WTC11 (cell line): ENCODE measurements at regions of chr1 and their contacts with region 1.

Region 1: GRCh38 chr1:32215629-32216480 is 6.3 kb downstream of the TMEM234 start:
- DNase-seq: peak; percentile 78
- ATAC-seq: peak; percentile 97
- H3K4me3 Mint-ChIP-seq: no peak overlapping the region
- H3K27ac Mint-ChIP-seq: no peak overlapping the region
- H3K4me1 Mint-ChIP-seq: peaks cover 2% of the 10 kb centered on the region; the same call in 1 of the 2 replicates
- H3K27me3 Mint-ChIP-seq: peaks cover 4% of the 10 kb centered on the region; the same call in 1 of the 2 replicates
- CTCF ChIP-seq: peak; percentile 62; the same call in 1 of the 2 replicates

Region 2: GRCh38 chr1:32142446-32143301 is 73.2 kb before region 1 on chr1:
- CTCF ChIA-PET with region 1: no interaction called
- POLR2A ChIA-PET with region 1: no interaction called
- DNase-seq: no peak
- ATAC-seq: peak; percentile 30; the same call in 1 of the 2 replicates
- H3K4me3 Mint-ChIP-seq: no peak overlapping the region
- H3K27ac Mint-ChIP-seq: no peak overlapping the region
- H3K4me1 Mint-ChIP-seq: no peaks in the 10 kb centered on the region
- H3K27me3 Mint-ChIP-seq: no peaks in the 10 kb centered on the region
- CTCF ChIP-seq: no peak

Region 3: DNA sequence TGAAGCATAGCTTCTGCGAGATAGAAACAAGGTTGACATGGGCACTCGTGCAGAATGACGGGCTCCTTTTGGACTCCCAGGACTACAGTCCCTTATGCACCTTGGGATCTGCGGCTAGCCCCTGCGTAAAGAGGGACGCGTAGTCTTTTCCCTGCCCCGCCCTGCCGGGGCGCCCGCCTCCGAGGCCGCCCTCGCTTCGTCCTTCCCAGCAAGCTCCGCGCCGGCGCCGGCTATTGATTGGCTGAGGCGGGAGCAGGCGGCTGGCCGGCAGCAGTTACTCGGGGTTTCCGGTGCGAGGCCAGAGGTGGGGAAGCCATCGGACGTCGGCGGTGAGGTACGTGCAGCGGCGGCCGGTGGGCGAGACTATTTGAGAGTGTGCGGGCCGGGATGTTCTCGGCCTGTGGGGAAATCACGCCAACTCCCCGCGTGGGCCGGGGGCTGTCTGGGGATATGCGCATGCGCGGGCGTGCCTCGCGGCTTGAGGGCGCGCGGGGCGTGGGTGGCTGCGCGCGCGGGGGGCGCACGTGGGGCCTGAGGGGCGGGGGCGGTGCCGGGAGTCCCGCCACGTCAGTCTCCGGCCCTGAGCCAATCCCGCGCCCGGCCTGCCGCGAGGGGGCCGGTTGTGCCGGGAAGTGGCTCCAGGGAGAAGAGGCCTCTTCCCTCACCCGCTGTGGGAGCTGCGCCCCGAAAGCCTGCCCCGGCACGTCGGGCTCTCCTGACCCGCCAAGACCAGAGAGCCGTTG is 36.2 kb before region 1 on chr1 and contains the start of gene TXLNA:
- CTCF ChIA-PET with region 1: interaction called, 18 read pairs
- POLR2A ChIA-PET with region 1: no interaction called
- DNase-seq: peak; percentile 92
- ATAC-seq: peak; percentile 90
- H3K4me3 Mint-ChIP-seq: peak within 1 kb of the TSS; percentile 91
- H3K27ac Mint-ChIP-seq: peak within 1 kb of the TSS; percentile 92
- H3K4me1 Mint-ChIP-seq: peaks cover 34% of the 10 kb centered on the region
- H3K27me3 Mint-ChIP-seq: no peaks in the 10 kb centered on the region; the same call in 1 of the 2 replicates
- CTCF ChIP-seq: no peak
- total RNA-seq, gene TXLNA: 46.3 to 49.8 TPM (median 47.2 TPM) in 3 replicates

Region 4: DNA sequence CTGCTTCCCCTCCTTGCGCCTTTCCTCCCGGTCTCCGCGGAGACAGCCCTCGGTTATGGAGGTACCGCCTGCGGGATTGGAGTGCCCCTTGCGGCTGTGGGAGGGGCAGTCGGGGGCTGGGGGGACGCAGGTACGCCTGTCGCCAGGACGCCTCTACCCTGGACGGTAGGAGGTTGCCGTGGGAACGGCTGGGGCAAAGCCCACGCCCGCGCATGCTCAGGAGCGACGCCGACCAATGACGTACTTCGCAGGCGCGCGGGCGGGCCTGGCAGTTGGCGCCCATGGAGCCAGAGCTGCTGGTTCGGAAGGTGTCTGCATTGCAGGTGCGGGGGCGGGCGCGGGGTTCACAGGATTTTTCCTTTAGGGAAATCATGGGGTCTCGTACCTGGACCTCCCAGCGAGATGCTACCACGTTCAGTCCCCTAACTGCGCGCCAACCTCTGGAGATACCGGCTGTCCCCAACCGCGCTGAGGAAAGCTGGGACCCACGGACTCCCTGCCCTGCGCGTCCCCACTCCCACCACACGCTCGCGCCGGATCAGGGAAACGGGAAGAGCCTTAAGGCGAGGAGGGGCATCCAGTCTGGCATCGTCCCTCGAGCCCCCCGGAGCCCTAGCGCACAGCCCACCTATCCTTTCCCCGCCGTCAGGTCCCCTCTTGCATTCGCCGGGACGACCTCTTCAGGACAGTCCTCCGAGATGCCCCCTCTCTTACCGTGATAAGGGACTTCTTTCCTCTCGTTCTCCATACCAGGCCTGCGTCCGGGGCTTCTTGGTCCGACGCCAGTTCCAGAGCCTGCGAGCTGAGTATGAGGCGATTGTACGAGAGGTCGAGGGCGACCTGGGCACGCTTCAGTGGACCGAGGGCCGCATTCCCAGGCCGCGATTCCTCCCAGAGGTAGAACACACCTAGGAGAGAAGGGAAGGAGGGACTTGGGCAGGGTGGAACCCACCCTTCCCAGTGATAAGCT is 10.2 kb before region 1 on chr1 and contains the start of gene IQCC:
- CTCF ChIA-PET with region 1: interaction called, 27 read pairs
- POLR2A ChIA-PET with region 1: interaction called, 8 read pairs
- DNase-seq: peak; percentile 94
- ATAC-seq: peak; percentile 78
- H3K4me3 Mint-ChIP-seq: peak within 1 kb of the TSS; percentile 96
- H3K27ac Mint-ChIP-seq: 0 out of 2 replicates have a peak within 1 kb of the TSS, but pooled peaks have one; percentile 74
- H3K4me1 Mint-ChIP-seq: peaks cover 19% of the 10 kb centered on the region
- H3K27me3 Mint-ChIP-seq: peaks cover 8% of the 10 kb centered on the region
- CTCF ChIP-seq: no peak
- total RNA-seq, gene IQCC: 4.6 to 5.2 TPM (median 4.8 TPM) in 3 replicates

Region 5: GRCh38 chr1:32247983-32248889 is 32.4 kb after region 1 on chr1:
- CTCF ChIA-PET with region 1: interaction called, 69 read pairs
- POLR2A ChIA-PET with region 1: interaction called, 6 read pairs
- DNase-seq: peak; percentile 96
- ATAC-seq: peak; percentile 85
- H3K4me3 Mint-ChIP-seq: peak overlapping the region; percentile 57
- H3K27ac Mint-ChIP-seq: peak overlapping the region; percentile 53
- H3K4me1 Mint-ChIP-seq: peaks cover 40% of the 10 kb centered on the region
- H3K27me3 Mint-ChIP-seq: peaks cover 4% of the 10 kb centered on the region
- CTCF ChIP-seq: peak; percentile 95

Region 6: DNA sequence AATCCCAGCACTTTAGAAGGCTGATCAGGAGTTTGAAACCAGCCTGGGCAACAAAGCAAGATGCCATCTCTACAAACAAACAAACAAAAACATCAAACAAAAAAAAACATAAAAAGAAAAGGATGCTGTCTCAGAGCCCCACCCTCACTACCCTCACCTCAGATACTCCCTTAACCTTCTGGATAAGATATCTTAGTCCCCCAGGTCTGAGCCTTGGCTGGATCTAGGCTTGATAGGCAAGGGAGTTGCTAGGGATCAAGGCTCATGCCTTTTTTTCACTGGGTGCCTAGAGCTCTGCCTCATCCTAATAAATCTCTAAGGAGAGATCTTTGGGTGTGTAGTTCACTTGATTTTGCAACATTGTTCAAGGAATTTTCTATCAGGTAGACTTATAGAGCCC is 83.5 kb after region 1 on chr1:
- CTCF ChIA-PET with region 1: interaction called, 10 read pairs
- POLR2A ChIA-PET with region 1: no interaction called
- DNase-seq: no peak
- ATAC-seq: no peak
- H3K4me3 Mint-ChIP-seq: no peak overlapping the region
- H3K27ac Mint-ChIP-seq: no peak overlapping the region
- H3K4me1 Mint-ChIP-seq: peaks cover 11% of the 10 kb centered on the region
- H3K27me3 Mint-ChIP-seq: no peaks in the 10 kb centered on the region
- CTCF ChIP-seq: no peak

Region 7: DNA sequence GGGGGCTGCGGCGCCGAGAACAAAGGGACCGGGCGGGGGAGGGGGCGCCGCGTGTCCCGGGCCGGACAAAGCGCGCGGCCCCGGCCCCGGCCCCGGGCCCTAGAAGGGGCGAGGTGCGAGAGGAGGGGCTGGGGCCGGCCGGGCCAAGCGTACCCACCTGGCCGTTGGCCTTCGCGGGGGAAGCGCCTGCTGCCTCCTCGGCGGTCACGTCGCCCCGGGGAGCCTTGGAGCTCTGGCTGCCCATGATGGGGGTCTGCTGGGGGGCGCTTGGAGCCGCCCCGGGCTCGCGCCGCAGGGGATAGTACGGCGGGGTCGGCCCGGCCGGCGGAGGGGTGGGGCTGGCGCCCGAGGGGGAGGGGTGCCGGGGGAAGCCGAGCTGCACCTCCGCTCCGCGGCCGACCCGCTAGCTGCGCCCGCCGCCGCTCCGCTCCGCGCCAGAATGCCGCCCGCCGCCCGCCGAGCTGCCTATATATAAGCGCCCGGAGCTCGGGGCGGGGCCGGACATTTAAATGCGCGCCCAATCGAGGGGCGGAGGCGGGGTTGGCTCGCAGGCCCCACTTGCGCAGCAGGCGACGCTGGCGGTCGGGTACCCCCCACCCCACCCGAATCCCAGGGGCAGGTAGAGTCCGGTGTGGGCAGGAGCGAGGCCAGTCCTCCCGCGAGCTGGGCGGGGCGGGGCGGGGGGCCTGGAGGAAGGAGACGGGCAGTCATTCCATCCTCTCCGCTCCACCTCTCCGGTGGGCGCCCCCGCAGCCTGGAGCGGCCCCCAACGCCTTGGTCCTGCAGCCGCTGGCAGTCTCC is 120.1 kb after region 1 on chr1 and contains the start of gene MARCKSL1:
- CTCF ChIA-PET with region 1: interaction called, 16 read pairs
- POLR2A ChIA-PET with region 1: interaction called, 8 read pairs
- DNase-seq: peak; percentile 82
- ATAC-seq: peak; percentile 43
- H3K4me3 Mint-ChIP-seq: peak within 1 kb of the TSS; percentile 95
- H3K27ac Mint-ChIP-seq: peak within 1 kb of the TSS; percentile 96
- H3K4me1 Mint-ChIP-seq: peaks cover 44% of the 10 kb centered on the region
- H3K27me3 Mint-ChIP-seq: peaks cover 16% of the 10 kb centered on the region
- CTCF ChIP-seq: no peak
- total RNA-seq, gene MARCKSL1: 442 to 450 TPM (median 443 TPM) in 3 replicates

Region 8: GRCh38 chr1:32394141-32394889 is 178.5 kb after region 1 on chr1 and contains the start of gene BSDC1:
- CTCF ChIA-PET with region 1: interaction called, 12 read pairs
- POLR2A ChIA-PET with region 1: interaction called, 7 read pairs
- DNase-seq: peak; percentile 99
- ATAC-seq: peak; percentile 97
- H3K4me3 Mint-ChIP-seq: peak within 1 kb of the TSS; percentile 98
- H3K27ac Mint-ChIP-seq: peak within 1 kb of the TSS; percentile 100
- H3K4me1 Mint-ChIP-seq: peaks cover 12% of the 10 kb centered on the region
- H3K27me3 Mint-ChIP-seq: no peaks in the 10 kb centered on the region
- CTCF ChIP-seq: no peak
- total RNA-seq, gene BSDC1: 42.4 to 44.3 TPM (median 43.6 TPM) in 3 replicates